ENCODE measurements at regions of chrX and their contacts with region 1.

Region 1: DNA sequence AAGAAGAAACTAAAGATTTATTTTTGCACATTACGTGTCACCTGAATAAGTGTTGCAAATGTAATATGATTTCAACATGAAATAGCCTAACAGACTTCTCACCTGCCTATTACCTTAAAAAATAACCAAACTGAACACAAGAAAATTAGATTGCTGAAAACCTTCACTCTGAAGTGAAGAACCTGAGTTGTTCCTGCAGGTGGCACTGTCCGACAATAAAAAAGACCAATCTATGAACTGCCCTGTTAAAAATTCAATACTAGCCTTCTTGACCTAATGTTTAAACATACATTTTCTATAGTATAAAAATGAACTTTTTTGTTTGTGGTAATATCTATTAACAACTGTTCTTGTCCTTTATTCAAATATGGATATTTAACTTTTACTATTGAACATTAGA is 69.2 kb upstream of the PNPLA4 start:
- DNase-seq: peak in 11 of 14 experiments; percentile 0 to 53 (median 3)
- ATAC-seq: no peak
- H3K4me3 ChIP-seq: no peak overlapping the region
- H3K4me3 Mint-ChIP-seq: no peak overlapping the region
- H3K27ac ChIP-seq: no peak overlapping the region
- H3K27ac Mint-ChIP-seq: no peak overlapping the region
- H3K4me1 ChIP-seq: no peaks in the 10 kb centered on the region
- H3K4me1 Mint-ChIP-seq: no peaks in the 10 kb centered on the region
- H3K27me3 ChIP-seq: no peaks in the 10 kb centered on the region
- H3K27me3 Mint-ChIP-seq: no peaks in the 10 kb centered on the region
- CTCF ChIP-seq: peak; percentile 38

Region 2: GRCh38 chrX:8049827-8050226 is 53.4 kb after region 1 on chrX:
- CTCF ChIA-PET with region 1: no interaction called
- POLR2A ChIA-PET with region 1: no interaction called
- intact Hi-C with region 1: no loop called
- DNase-seq: no peak
- ATAC-seq: no peak
- H3K4me3 ChIP-seq: no peak overlapping the region
- H3K4me3 Mint-ChIP-seq: no peak overlapping the region
- H3K27ac ChIP-seq: no peak overlapping the region
- H3K27ac Mint-ChIP-seq: no peak overlapping the region
- H3K4me1 ChIP-seq: no peaks in the 10 kb centered on the region
- H3K4me1 Mint-ChIP-seq: no peaks in the 10 kb centered on the region
- H3K27me3 ChIP-seq: no peaks in the 10 kb centered on the region
- H3K27me3 Mint-ChIP-seq: no peaks in the 10 kb centered on the region
- CTCF ChIP-seq: no peak

Region 3: DNA sequence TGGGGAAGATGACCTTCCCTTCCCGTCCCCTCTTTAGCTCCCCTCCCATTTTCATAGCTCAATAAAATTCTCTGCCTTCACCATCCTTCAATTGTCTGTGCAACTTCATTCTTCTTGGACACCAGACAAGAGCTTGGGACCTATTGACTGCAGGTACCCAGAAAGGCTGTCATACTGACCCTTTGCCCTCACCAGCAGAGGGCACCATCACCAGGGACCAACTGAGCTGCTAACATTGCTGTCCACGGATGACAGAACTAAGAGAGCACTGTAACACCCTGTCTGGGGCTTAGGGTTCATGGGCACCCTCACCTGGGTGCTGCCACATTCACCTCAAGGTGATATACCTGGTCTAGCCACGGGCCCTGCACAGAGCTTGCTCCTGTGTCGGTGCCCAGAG is 326.9 kb after region 1 on chrX:
- CTCF ChIA-PET with region 1: no interaction called
- POLR2A ChIA-PET with region 1: no interaction called
- intact Hi-C with region 1: no loop called
- DNase-seq: no peak
- ATAC-seq: no peak
- H3K4me3 ChIP-seq: no peak overlapping the region
- H3K4me3 Mint-ChIP-seq: no peak overlapping the region
- H3K27ac ChIP-seq: no peak overlapping the region
- H3K27ac Mint-ChIP-seq: no peak overlapping the region
- H3K4me1 ChIP-seq: no peaks in the 10 kb centered on the region
- H3K4me1 Mint-ChIP-seq: no peaks in the 10 kb centered on the region
- H3K27me3 ChIP-seq: no peaks in the 10 kb centered on the region
- H3K27me3 Mint-ChIP-seq: no peaks in the 10 kb centered on the region
- CTCF ChIP-seq: no peak

Region 4: GRCh38 chrX:8743126-8743732 is 746.8 kb after region 1 on chrX:
- CTCF ChIA-PET with region 1: no interaction called
- POLR2A ChIA-PET with region 1: no interaction called
- intact Hi-C with region 1: loop called in 1 of 2 experiments (anchors 1 kb)
- DNase-seq: peak; percentile 27 to 74 (median 52)
- ATAC-seq: peak; percentile 46
- H3K4me3 ChIP-seq: no peak overlapping the region
- H3K4me3 Mint-ChIP-seq: no peak overlapping the region
- H3K27ac ChIP-seq: no peak overlapping the region
- H3K27ac Mint-ChIP-seq: no peak overlapping the region
- H3K4me1 ChIP-seq: no peaks in the 10 kb centered on the region
- H3K4me1 Mint-ChIP-seq: no peaks in the 10 kb centered on the region
- H3K27me3 ChIP-seq: peaks cover 0 to 2% of the 10 kb centered on the region in 2 experiments
- H3K27me3 Mint-ChIP-seq: peaks cover 11% of the 10 kb centered on the region
- CTCF ChIP-seq: peak; percentile 71

Measured in CD4-positive, alpha-beta T cell (primary cell).